Activated B cell treated with CpG ODN at 0.5 μM for 24 hours (primary cell): ENCODE measurements at regions of chr17 and their contacts with region 1.

Region 1: DNA sequence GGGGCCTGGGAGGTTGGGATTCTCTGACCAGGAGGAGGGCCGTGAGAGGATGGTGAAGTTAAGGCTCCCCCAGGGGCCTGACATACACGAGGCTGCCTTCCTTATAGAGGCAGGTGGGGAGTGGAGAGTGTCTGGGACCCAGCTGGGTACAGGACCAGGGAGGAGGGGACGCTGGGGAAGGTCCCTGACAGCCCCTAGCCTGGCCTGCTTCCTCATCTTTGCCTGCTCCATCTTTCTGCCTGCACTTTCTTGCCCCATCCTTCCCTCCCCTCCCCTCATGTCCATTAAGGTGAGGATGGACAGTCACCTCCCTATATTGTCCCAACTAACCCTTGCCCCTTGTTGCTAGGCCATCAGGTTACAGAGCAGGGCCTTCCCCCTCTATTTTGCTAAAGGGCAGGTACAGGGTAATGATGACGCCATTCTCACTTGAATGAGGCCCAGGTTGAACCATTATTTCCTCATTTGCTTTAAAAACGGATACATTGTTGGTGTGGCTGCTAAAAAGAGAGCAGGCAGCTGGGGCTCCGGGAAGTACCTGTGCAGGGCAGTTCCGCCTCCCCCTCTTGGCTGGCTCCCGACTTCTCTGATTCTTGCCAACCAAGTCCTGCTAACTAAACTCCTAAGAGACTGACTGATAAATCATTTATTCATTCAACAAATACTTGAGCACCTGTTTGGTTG is 1.3 kb downstream of the C17orf99 start:
- DNase-seq: no peak
- ATAC-seq: peak; percentile 78
- H3K4me3 Mint-ChIP-seq: peak overlapping the region; percentile 64
- H3K27ac Mint-ChIP-seq: peak overlapping the region; percentile 94
- H3K4me1 Mint-ChIP-seq: peaks cover 87% of the 10 kb centered on the region
- H3K27me3 Mint-ChIP-seq: no peaks in the 10 kb centered on the region
- CTCF ChIP-seq: no peak

Region 2: DNA sequence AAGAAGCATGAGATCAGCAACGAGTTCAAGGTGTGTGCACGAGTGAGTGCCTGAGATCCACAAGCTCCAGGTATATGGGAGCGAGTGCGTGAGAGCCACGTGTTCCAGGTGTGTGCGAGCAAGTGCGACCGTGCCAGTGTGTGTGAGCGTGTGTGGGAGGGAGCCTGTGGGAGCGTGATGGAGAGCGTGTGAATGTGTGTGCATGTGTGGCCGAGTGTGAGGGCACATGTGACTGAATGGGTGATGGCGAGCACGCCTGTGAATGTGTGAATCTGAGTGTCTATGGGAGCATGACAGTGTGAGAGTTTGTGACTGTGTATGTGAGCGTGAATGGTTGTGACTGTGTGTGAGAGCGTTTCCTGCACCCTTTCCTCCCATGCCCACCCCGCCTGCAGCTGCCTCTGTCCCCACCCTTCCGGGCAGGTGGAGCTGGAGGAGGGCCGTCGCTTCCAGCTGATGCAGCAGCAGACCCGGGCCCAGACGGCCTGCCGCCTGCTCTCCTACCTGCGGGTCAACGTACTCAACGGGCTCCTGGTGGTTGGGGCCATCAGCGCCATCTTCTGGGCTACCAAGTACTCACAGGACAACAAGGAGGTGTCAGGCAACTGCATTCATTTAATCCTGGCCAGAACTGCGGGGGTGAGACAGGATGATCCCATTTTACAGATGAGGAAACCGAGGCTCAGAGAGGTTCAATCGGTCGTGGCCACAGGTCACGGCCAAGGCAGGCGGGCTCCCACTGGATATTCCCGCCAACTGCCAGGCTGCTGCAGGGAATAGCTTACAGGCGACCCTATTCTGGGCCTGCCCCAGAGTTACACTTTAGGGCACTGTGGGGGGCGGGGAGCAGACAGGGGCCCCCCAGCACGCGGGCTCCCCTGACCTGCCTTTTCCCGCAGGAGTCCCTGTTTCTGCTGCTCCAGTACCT is 13.2 kb before region 1 on chr17:
- CTCF ChIA-PET with region 1: interaction called, 14 read pairs
- POLR2A ChIA-PET with region 1: interaction called, 1,040 read pairs
- intact Hi-C with region 1: loop called (anchors 1 kb)
- DNase-seq: peak; percentile 59
- ATAC-seq: peak; percentile 15
- H3K4me3 Mint-ChIP-seq: peak overlapping the region; percentile 95
- H3K27ac Mint-ChIP-seq: peak overlapping the region; percentile 81
- H3K4me1 Mint-ChIP-seq: peaks cover 87% of the 10 kb centered on the region
- H3K27me3 Mint-ChIP-seq: no peaks in the 10 kb centered on the region
- CTCF ChIP-seq: peak; percentile 69